Dendritic cell treated with granulocyte-macrophage colony-stimulating factor and Interleukin-4, amounts not matched to agents 40 ng/mL and 50 ng/mL, for 4 days (primary cell): ENCODE measurements at regions of chr15 and their contacts with region 1.

Region 1: GRCh38 chr15:78308422-78309032 is 9.1 kb upstream of the SKIC8 start:
- H3K4me3 Mint-ChIP-seq: peak overlapping the region; percentile 45
- H3K27ac Mint-ChIP-seq: peak overlapping the region; percentile 80
- H3K4me1 Mint-ChIP-seq: peaks cover 16% of the 10 kb centered on the region
- H3K27me3 Mint-ChIP-seq: no peaks in the 10 kb centered on the region

Region 2: GRCh38 chr15:78204351-78205309 is 103.9 kb before region 1 on chr15:
- intact Hi-C with region 1: no loop called
- H3K4me3 Mint-ChIP-seq: no peak overlapping the region
- H3K27ac Mint-ChIP-seq: no peak overlapping the region
- H3K4me1 Mint-ChIP-seq: no peaks in the 10 kb centered on the region
- H3K27me3 Mint-ChIP-seq: no peaks in the 10 kb centered on the region

Region 3: DNA sequence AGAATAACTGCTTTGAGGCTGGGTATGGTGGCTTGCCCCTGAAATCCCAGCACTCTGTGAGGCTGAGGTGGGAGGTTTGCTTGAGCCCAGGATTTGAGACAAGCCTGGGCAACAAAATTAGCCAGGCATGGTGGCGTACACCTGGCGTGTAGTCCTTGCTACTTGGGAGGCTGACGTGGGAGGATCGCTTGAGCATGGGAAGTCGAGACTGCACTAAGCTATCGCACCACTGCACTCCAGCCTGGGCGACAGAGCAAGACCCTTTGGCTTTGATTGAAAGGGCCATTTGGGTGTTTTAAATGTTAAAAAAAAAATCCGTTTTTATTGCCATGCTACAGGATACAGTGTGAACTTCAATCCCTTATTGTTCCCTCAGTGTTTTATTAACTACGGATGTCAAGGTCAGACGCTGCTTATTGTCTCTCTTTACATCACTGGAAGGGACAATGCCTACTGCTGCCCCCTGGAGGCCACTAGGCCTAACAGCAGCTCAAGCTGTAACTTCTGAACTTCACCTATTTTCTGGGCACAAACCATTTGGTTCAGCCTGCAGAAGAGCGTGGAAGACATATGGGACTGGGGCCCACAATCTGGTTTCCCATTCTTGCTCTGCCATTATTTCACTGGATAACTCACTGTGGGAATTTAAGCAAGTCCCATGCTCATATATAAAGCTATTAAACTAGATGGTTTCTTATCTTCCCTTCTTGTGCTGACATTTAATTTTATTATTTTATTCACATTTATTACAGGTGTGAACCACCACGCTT is 114.2 kb after region 1 on chr15:
- intact Hi-C with region 1: loop called (anchors 2 kb)
- H3K4me3 Mint-ChIP-seq: no peak overlapping the region
- H3K27ac Mint-ChIP-seq: no peak overlapping the region
- H3K4me1 Mint-ChIP-seq: peaks cover 27% of the 10 kb centered on the region
- H3K27me3 Mint-ChIP-seq: no peaks in the 10 kb centered on the region

Region 4: DNA sequence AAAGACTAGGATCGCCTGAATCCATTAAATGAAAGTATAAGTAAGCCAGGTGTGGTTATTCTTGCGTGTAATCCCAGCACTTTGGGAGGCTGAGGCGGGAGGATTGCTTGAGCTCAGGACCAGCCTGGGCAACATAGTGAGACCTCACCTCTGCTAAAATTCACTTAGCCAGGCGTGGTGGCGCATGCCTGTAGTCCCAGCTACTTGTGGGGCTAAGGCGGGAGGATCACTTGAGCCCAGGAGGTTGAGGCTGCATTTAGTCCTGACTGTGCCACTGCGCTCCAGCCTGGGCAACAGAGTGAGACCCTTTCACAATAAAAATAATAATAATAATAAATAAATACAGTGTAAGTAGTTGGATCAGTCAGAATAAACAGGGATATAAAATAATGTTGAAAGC is 173.4 kb after region 1 on chr15:
- intact Hi-C with region 1: loop called (anchors 1 kb)
- H3K4me3 Mint-ChIP-seq: no peak overlapping the region
- H3K27ac Mint-ChIP-seq: no peak overlapping the region
- H3K4me1 Mint-ChIP-seq: no peaks in the 10 kb centered on the region
- H3K27me3 Mint-ChIP-seq: no peaks in the 10 kb centered on the region